Mammary epithelial cell (primary cell): ENCODE measurements at regions of chr3 and their contacts with region 1.

Region 1: DNA sequence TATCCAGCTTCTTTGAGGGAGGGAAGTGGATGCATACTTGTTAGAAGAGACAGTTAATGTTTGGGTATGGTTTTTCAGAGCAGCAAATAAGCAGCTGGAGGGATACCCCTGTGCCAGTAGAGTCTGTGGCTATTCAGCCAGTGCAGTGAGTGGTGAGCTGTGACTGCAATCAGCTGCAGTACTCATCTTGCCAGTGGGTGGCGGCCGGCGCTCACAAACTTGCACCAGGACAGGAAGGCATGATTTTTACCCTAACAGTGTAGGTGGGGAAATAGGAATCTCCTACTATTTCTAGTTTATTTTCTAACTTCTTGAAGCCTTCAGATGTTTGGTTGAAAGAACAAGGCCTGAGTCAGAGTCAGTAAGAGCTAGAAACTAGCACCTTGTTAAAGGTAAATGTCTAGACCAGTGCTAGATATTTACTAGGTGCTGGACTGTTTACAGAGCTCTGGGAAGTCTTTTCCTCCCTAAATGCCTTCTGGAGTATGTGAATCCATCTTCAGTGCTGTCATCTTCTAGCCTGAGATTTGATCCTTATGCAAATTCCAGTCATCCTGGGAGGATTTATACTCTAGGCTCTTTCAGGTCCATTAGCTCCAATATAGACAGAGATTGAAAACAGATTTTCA is 23.6 kb downstream of the TIMP4 start:
- DNase-seq: peak; percentile 39
- H3K4me3 ChIP-seq: no peak overlapping the region
- H3K27ac ChIP-seq: no peak overlapping the region
- H3K4me1 ChIP-seq: no peaks in the 10 kb centered on the region
- H3K27me3 ChIP-seq: peaks cover 8% of the 10 kb centered on the region
- CTCF ChIP-seq: peak; percentile 95

Region 2: GRCh38 chr3:12175844-12176453 is 40.8 kb after region 1 on chr3:
- CTCF ChIA-PET with region 1: interaction called, 3 read pairs
- dilution Hi-C with region 1: loop called (anchors 5 kb)
- in situ Hi-C with region 1: loop called in 1 of 2 experiments (anchors 5 kb)
- intact Hi-C with region 1: loop called (anchors 1 kb)
- DNase-seq: no peak
- H3K4me3 ChIP-seq: no peak overlapping the region
- H3K27ac ChIP-seq: no peak overlapping the region
- H3K4me1 ChIP-seq: peaks cover 15% of the 10 kb centered on the region
- H3K27me3 ChIP-seq: no peaks in the 10 kb centered on the region
- CTCF ChIP-seq: peak; percentile 78 to 92

Region 3: DNA sequence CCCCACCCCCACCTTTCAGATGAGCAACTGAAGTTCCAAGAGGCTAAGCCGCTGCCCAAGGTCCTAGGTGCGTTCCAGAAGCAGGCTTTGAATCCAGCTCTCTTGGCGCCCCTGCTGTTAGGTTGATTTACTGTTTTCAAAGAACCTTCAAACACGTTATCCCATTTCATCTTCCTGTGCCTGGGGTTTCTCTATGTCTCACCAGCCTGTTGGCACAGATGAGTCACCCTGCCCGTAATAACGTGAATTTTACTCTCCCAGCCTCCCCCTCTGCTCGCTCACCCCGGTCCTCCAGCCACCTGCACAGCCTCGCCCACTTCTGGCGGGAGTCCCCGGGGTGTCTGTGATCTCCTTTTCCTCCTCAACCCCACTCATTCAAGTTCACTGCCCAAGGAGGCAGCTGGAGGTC is 336.1 kb after region 1 on chr3:
- CTCF ChIA-PET with region 1: interaction called, 3 read pairs
- dilution Hi-C with region 1: loop called (anchors 25 kb)
- in situ Hi-C with region 1: loop called (anchors 5 kb)
- intact Hi-C with region 1: no loop called
- DNase-seq: peak; percentile 71
- H3K4me3 ChIP-seq: no peak overlapping the region
- H3K27ac ChIP-seq: no peak overlapping the region
- H3K4me1 ChIP-seq: no peaks in the 10 kb centered on the region
- H3K27me3 ChIP-seq: no peaks in the 10 kb centered on the region
- CTCF ChIP-seq: no peak

Region 4: DNA sequence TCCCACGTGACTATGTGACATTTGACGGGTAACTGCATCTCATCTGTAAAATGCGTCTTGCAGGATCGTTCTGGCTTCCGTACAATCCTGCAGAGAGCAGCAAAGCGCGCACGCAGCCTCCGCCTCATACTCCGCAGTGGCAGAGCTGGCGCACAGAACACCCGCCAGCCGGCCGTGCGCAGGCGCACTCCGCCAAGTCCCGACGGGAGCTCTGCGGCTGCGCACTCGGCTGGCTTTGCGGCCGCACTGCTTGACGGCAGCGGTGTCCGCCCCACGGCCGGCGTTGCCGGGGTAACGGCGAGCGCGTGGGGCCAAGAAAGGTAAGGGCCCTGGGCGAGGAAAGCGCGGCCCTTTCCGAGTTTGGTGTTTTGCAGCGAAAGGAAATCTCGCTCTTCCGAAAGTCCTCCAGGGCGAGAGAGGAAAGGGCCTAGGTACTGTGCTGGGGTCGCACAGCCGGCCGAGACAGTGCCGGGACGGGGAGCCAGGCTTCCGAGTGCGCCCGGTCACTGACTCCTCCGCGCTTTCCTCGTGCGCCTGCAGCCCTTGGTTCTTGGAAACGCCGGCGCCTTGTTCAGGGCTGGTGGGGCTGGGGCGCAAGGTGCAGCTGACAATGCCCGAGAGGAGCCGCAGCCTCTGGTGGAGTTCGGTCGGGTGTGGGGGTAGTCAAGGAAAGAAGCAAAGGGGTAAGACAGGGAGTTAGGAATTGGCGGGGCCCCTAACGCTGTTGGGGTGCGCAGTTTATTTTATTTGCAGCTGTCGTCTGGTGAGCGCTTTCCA is 349.2 kb after region 1 on chr3 and contains the start of gene TSEN2:
- CTCF ChIA-PET with region 1: interaction called, 13 read pairs
- dilution Hi-C with region 1: no loop called
- in situ Hi-C with region 1: loop called (anchors 5 kb)
- intact Hi-C with region 1: loop called (anchors 1 kb)
- DNase-seq: peak; percentile 95
- H3K4me3 ChIP-seq: peak within 1 kb of the TSS; percentile 62 to 82 (median 79)
- H3K27ac ChIP-seq: peak within 1 kb of the TSS; percentile 38
- H3K4me1 ChIP-seq: peaks cover 19% of the 10 kb centered on the region
- H3K27me3 ChIP-seq: no peaks in the 10 kb centered on the region
- CTCF ChIP-seq: peak in 1 of 2 donors; percentile 38
- total RNA-seq, gene TSEN2: 16.0 to 24.6 TPM

Region 5: DNA sequence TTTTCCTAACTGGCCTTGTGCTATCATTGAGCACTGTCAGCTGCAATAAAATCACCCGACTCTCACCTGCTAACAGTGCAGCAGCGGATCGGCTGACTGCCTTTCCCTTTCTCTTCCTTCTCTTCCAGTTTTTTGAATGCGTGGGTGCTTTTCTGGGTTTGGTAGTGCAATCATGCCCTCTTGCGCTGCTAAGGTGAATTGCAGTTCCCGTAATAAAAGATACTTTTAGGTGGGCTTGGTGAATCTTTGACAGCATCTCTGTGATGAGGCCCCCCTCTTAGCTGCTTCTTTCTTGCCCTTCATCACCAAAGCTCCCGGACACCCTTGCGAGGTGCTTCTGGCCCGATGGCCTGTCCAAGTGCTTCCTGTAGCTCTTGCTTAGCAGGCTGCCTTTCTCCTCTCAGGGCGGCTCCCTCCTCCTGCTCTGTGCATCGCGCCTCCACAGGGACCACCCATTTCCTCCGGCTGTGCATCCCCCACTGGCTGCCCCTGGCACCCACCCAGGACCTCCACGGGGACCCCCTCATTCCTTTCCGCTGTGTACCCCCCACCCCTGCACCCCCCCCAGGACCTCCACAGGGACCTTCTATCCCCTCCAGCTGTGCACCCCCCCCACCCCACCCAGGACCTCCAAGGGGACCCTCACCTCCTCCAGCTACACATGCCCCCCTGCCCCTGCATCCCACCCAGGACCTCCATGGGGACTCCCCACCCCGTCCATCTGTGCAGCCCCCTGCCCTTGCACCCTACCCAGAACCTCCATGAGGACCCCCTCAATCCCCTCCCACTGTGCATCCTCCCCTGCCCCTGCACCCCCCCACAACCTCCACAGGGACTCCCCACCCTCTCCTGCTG is 757.1 kb after region 1 on chr3:
- CTCF ChIA-PET with region 1: no interaction called
- dilution Hi-C with region 1: no loop called
- in situ Hi-C with region 1: loop called (anchors 25 kb)
- intact Hi-C with region 1: no loop called
- DNase-seq: peak; percentile 45
- H3K4me3 ChIP-seq: peak overlapping the region in 1 of 3 experiments; percentile 10
- H3K27ac ChIP-seq: no peak overlapping the region
- H3K4me1 ChIP-seq: peaks cover 3% of the 10 kb centered on the region
- H3K27me3 ChIP-seq: no peaks in the 10 kb centered on the region
- CTCF ChIP-seq: peak; percentile 88 to 94

Region 6: GRCh38 chr3:13161024-13161759 is 1026.0 kb after region 1 on chr3:
- CTCF ChIA-PET with region 1: no interaction called
- dilution Hi-C with region 1: no loop called
- in situ Hi-C with region 1: no loop called
- intact Hi-C with region 1: no loop called
- DNase-seq: no peak
- H3K4me3 ChIP-seq: no peak overlapping the region
- H3K27ac ChIP-seq: no peak overlapping the region
- H3K4me1 ChIP-seq: no peaks in the 10 kb centered on the region
- H3K27me3 ChIP-seq: no peaks in the 10 kb centered on the region
- CTCF ChIP-seq: no peak